AG04450 (cell line): ENCODE measurements at regions of chr15 and their contacts with region 1.

Region 1: DNA sequence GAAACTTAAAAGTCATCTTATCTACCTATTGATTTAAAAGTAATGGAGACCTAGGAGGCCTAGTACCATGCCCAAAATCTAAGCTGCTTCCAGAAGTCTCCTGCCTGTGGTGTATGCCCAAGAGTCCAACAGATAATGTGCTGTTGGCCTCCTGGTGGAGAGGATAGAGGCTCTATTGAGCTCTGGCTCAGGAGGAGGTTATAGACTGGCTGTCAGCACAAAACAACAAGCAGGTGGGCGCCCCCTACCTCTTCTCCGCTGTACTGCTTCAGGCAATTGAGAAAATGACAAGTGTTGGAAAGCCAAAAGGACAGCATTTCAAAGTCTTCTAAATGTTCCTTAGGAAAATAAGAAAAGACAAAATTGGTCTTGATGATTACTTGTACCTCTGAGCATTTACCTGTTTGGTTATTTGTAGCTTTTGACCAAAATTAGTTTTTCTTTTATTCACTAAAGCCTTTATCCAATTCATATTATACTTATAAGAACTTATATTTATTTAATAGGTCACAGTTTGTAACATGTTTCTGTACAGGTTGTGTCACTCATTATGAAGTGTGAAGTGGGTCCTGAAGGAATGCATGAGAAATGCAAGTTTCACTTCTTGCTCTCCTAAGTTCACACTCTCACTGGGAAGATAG is 17.2 kb upstream of the GNB5 start:
- DNase-seq: peak; percentile 43
- H3K4me3 ChIP-seq: no peak overlapping the region
- H3K27ac ChIP-seq: no peak overlapping the region
- H3K27me3 ChIP-seq: peaks cover 29% of the 10 kb centered on the region
- CTCF ChIP-seq: peak; percentile 85

Region 2: GRCh38 chr15:51971375-51972133 is 236.9 kb before region 1 on chr15 and contains the start of gene LEO1:
- CTCF ChIA-PET with region 1: interaction called, 16 read pairs
- POLR2A ChIA-PET with region 1: no interaction called
- DNase-seq: peak; percentile 97
- H3K4me3 ChIP-seq: peak within 1 kb of the TSS; percentile 96
- H3K27ac ChIP-seq: peak within 1 kb of the TSS; percentile 87
- H3K27me3 ChIP-seq: no peaks in the 10 kb centered on the region
- CTCF ChIP-seq: peak; percentile 51
- polyA plus RNA-seq, gene LEO1: 6.8 and 8.0 TPM in 2 replicates

Region 3: DNA sequence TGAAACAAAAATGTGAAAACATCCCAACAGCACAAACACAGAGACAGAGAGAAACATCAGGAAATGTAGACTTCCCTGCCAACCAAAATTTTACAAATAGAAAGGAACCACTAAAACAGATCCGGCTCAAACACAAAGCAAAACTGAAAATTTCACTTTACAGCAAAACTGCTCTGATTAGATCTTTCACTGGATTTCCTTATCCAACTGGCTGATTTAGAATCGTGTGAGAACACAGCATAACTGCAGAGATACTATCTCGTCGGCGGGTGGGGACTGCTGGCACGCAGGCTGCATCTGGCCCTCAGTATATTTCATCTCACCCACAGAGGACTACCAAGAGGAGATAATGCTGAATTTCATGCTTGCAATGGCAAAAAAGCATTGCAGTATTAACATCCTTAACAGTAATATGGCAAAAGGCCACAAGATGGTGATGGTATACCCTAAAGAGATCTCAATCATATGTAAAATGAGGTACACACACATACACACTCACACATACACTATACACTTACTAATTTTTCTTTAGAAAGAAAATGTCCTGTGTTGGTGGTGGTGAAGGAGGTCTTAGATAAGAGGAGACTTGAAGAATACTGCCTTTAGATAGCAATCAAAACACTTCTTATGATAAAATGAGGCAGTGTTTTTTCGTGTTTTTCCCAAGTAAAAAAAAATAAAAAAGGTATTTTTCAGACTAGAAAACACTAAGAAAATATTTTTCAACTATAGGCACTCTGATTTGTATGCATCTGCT is 226.2 kb before region 1 on chr15:
- CTCF ChIA-PET with region 1: interaction called, 11 read pairs
- POLR2A ChIA-PET with region 1: no interaction called
- DNase-seq: peak; percentile 54
- H3K4me3 ChIP-seq: no peak overlapping the region
- H3K27ac ChIP-seq: no peak overlapping the region
- H3K27me3 ChIP-seq: no peaks in the 10 kb centered on the region
- CTCF ChIP-seq: peak; percentile 72

Region 4: GRCh38 chr15:52179278-52180195 is 28.9 kb before region 1 on chr15:
- CTCF ChIA-PET with region 1: interaction called, 16 read pairs
- POLR2A ChIA-PET with region 1: no interaction called
- DNase-seq: no peak
- H3K4me3 ChIP-seq: peak overlapping the region; percentile 90
- H3K27ac ChIP-seq: peak overlapping the region; percentile 52
- H3K27me3 ChIP-seq: no peaks in the 10 kb centered on the region
- CTCF ChIP-seq: no peak

Region 5: DNA sequence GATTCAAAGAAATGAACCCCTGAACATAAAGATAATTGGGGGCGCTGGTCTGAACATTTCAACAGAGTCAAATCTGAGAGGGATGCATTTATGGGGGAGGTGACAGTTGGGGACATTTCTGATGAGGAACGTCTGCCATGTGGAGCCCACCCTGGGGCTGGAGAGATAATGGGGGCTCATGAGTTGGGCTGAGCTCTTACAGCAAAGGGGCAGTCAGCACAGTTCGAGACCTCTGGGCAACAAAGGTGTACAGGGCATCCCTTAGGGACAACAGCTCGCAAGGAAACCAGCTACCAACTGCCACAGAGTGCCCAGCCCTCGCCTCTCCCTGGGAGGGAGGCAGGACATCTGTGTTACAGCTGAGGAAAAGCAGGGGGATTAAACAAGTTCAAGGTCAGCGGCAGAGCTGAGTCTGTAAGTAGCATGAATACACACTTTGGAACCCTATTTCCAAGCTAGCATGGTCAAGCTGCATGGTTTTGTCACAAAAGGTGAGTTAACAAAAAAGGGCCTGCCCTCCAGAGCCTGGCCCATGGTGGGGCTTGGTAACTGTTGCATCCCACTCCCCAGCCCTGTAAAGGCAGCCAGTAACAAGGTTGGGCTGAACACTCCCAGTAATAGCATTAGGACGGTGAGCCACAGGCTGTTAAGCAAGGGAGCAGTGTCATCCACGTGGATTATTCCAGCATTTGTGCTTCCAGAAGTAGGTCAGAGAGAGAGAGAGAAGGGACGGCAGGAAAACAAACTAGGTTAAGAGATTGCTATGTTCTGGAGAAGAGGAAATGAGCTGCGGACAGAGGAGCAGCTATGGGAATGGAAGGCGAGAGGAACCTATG is 21.6 kb before region 1 on chr15:
- CTCF ChIA-PET with region 1: interaction called, 16 read pairs
- POLR2A ChIA-PET with region 1: no interaction called
- DNase-seq: no peak
- H3K4me3 ChIP-seq: no peak overlapping the region
- H3K27ac ChIP-seq: no peak overlapping the region
- H3K27me3 ChIP-seq: no peaks in the 10 kb centered on the region
- CTCF ChIP-seq: no peak

Region 6: GRCh38 chr15:52193791-52194190 is 14.6 kb before region 1 on chr15:
- CTCF ChIA-PET with region 1: interaction called, 14 read pairs
- POLR2A ChIA-PET with region 1: interaction called, 4 read pairs
- DNase-seq: no peak
- H3K4me3 ChIP-seq: no peak overlapping the region
- H3K27ac ChIP-seq: no peak overlapping the region
- H3K27me3 ChIP-seq: peaks cover 5% of the 10 kb centered on the region
- CTCF ChIP-seq: no peak